IMR-90 (cell line): ENCODE measurements at regions of chr5 and their contacts with region 1.

Region 1: GRCh38 chr5:146165460-146165859 is 17.0 kb downstream of the LARS1 start:
- DNase-seq: peak; percentile 2
- ATAC-seq: peak; percentile 63
- H3K4me3 ChIP-seq: no peak overlapping the region
- H3K27ac ChIP-seq: no peak overlapping the region
- H3K4me1 ChIP-seq: no peaks in the 10 kb centered on the region; the same call in 1 of the 2 replicates
- H3K27me3 ChIP-seq: no peaks in the 10 kb centered on the region
- CTCF ChIP-seq: no peak
- POLR2A ChIP-seq: no peak
- RAD21 ChIP-seq: no peak

Region 2: GRCh38 chr5:146111409-146111808 is 54.1 kb before region 1 on chr5:
- CTCF ChIA-PET with region 1: no interaction called
- POLR2A ChIA-PET with region 1: no interaction called
- dilution Hi-C with region 1: no loop called
- in situ Hi-C with region 1: loop called (anchors 10 kb)
- intact Hi-C with region 1: no loop called
- DNase-seq: no peak
- ATAC-seq: no peak
- H3K4me3 ChIP-seq: no peak overlapping the region
- H3K27ac ChIP-seq: no peak overlapping the region
- H3K4me1 ChIP-seq: no peaks in the 10 kb centered on the region
- H3K27me3 ChIP-seq: no peaks in the 10 kb centered on the region
- CTCF ChIP-seq: no peak
- POLR2A ChIP-seq: no peak
- RAD21 ChIP-seq: no peak

Region 3: GRCh38 chr5:146369691-146370090 is 204.2 kb after region 1 on chr5:
- CTCF ChIA-PET with region 1: no interaction called
- POLR2A ChIA-PET with region 1: no interaction called
- dilution Hi-C with region 1: no loop called
- in situ Hi-C with region 1: no loop called
- intact Hi-C with region 1: no loop called
- DNase-seq: peak; percentile 53
- ATAC-seq: no peak
- H3K4me3 ChIP-seq: no peak overlapping the region
- H3K27ac ChIP-seq: no peak overlapping the region
- H3K4me1 ChIP-seq: no peaks in the 10 kb centered on the region
- H3K27me3 ChIP-seq: peaks cover 2% of the 10 kb centered on the region
- CTCF ChIP-seq: no peak
- POLR2A ChIP-seq: no peak
- RAD21 ChIP-seq: no peak